ENCODE measurements at regions of chr6 and their contacts with region 1.

Region 1: GRCh38 chr6:154247119-154247861 is 109.3 kb downstream of the IPCEF1 start:
- DNase-seq: peak; percentile 74
- H3K4me3 Mint-ChIP-seq: peak overlapping the region; percentile 83
- H3K27ac Mint-ChIP-seq: peak overlapping the region; percentile 78
- H3K4me1 Mint-ChIP-seq: peaks cover 72% of the 10 kb centered on the region
- H3K27me3 Mint-ChIP-seq: peaks cover 6% of the 10 kb centered on the region

Region 2: DNA sequence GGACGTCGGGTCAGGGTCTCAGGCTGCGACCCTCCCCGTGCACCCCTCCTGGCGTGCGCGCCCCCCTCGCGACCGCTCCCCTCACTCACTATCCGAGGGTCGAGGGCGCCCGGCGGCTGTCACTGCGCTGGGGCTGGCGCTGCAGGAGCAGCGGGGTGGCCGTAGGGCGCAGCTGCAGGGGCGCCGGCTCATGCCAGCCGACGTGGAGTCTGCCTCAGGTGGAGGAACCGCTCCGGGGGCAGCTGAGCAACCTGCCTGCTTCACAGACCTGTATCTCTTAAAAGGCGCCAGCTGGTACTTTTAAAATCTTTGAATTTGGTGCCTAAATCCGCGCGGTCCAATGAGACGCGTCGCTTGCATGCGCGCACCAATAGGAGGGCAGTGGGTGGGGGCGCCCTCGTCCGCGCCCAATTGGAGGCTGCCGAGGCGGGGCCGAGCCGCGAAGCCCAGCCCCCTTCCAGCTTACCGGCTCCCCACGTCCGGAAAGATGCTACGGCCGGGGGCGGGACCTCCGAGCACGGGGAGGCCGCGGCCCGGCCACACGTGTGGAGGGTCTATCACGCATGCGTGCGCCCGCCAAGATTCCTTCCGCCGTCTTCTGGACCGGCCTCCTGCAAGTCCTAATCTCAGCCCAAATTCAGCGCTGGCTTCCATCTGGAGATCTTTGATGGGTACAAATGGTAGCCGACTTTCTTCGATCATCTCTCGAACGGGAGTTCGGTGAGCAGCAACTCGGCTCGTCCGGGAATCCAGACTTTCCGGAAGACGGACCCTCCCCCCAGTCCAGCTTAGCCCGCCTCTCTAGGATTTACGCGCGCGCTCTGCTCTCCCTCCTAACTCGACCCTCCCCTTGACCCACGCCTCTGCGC is 1264.3 kb before region 1 on chr6 and contains the start of gene FBXO5:
- intact Hi-C with region 1: loop called (anchors 10 kb)
- DNase-seq: peak; percentile 99
- H3K4me3 Mint-ChIP-seq: peak within 1 kb of the TSS; percentile 92
- H3K27ac Mint-ChIP-seq: peak within 1 kb of the TSS; percentile 100
- H3K4me1 Mint-ChIP-seq: peaks cover 46% of the 10 kb centered on the region
- H3K27me3 Mint-ChIP-seq: no peaks in the 10 kb centered on the region
- total RNA-seq, gene FBXO5: 34.9 and 36.4 TPM in 2 replicates

Region 3: DNA sequence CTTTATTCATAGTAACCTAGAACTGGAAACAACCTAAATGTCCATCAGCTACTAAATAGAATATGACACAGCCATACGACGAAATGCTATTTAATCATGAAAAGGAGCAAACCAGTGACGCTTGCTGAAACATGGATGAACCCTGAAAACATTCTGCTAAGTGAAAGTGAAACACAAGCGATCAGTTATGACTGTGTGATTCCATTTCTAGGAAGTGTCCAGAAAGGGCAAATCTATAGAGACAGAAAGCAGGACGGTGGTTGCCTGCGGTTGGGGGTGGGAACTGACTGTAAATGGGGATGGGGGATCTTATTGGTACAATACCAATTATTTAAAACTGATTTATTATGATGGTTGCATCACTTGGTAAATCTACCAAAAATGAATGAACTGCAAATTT is 17.5 kb before region 1 on chr6:
- intact Hi-C with region 1: loop called (anchors 1 kb)
- DNase-seq: peak; percentile 89
- H3K4me3 Mint-ChIP-seq: peak overlapping the region; percentile 76
- H3K27ac Mint-ChIP-seq: peak overlapping the region; percentile 65
- H3K4me1 Mint-ChIP-seq: peaks cover 46% of the 10 kb centered on the region
- H3K27me3 Mint-ChIP-seq: no peaks in the 10 kb centered on the region

Region 4: DNA sequence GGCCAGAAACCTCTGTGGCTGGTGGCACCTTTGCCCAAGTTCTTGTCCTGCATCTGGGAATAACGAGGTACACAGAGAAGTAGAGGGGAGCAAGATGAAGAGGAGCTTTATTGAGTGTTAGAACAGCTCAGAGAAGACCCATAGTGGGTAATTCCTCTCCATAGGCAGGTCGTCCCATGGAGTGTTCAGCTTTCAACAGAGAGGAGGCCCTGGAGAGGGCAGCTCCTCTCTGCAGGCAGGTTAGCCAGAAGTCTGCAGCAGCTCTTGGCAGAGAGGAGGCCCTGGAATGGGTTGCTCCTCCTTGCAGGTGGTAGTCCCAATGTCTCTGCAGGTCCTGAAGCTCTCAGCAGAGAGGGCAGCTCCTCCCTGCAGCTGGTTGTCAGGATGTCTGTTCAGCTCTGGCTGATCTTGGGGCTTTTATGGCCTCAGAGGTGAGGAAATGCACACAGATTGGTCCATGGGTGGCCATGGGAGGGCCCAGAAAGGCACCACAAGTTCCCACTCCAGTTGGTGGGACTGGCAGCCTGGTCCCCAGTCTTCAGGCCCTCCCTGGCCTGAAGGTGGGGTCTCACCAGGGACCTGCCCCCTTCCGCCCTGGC is 20.3 kb after region 1 on chr6:
- intact Hi-C with region 1: loop called (anchors 1 kb)
- DNase-seq: no peak
- H3K4me3 Mint-ChIP-seq: no peak overlapping the region
- H3K27ac Mint-ChIP-seq: peak overlapping the region; percentile 39
- H3K4me1 Mint-ChIP-seq: peaks cover 15% of the 10 kb centered on the region
- H3K27me3 Mint-ChIP-seq: peaks cover 17% of the 10 kb centered on the region

Region 5: GRCh38 chr6:154276810-154277628 is 29.7 kb after region 1 on chr6:
- intact Hi-C with region 1: loop called (anchors 1 kb)
- DNase-seq: peak; percentile 56
- H3K4me3 Mint-ChIP-seq: peak overlapping the region; percentile 54
- H3K27ac Mint-ChIP-seq: peak overlapping the region; percentile 80
- H3K4me1 Mint-ChIP-seq: peaks cover 19% of the 10 kb centered on the region
- H3K27me3 Mint-ChIP-seq: peaks cover 15% of the 10 kb centered on the region

Region 6: DNA sequence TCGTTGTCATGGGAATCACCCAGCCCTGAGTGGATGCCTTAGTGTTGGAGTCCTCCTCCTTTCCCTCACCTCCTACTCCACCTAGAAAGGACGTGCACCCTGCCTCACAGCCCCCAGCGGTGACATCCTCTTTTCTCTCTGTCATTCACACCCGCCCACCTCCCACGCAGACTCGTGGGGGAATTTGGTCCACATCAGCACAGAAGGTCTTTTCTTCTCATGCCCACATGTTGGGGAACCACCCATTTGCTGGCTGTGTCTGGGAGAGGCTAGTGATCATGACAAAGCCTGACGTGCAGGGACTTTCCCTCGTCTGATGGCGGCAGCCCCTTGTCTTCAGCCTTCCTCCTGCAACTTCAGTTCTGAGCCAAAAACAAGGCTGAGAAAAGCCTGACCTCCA is 359.2 kb after region 1 on chr6:
- intact Hi-C with region 1: loop called (anchors 5 kb)
- DNase-seq: peak; percentile 86
- H3K4me3 Mint-ChIP-seq: peak overlapping the region; percentile 57
- H3K27ac Mint-ChIP-seq: peak overlapping the region; percentile 82
- H3K4me1 Mint-ChIP-seq: peaks cover 34% of the 10 kb centered on the region
- H3K27me3 Mint-ChIP-seq: no peaks in the 10 kb centered on the region

Measured in activated CD4-positive, alpha-beta T cell treated with anti-CD3 and anti-CD28 coated beads, Interleukin-2, amount 10 ng/mL, durations not matched to agents 24 days and 14 days (primary cell).